ENCODE measurements at regions of chr1 and their contacts with region 1.

Region 1: DNA sequence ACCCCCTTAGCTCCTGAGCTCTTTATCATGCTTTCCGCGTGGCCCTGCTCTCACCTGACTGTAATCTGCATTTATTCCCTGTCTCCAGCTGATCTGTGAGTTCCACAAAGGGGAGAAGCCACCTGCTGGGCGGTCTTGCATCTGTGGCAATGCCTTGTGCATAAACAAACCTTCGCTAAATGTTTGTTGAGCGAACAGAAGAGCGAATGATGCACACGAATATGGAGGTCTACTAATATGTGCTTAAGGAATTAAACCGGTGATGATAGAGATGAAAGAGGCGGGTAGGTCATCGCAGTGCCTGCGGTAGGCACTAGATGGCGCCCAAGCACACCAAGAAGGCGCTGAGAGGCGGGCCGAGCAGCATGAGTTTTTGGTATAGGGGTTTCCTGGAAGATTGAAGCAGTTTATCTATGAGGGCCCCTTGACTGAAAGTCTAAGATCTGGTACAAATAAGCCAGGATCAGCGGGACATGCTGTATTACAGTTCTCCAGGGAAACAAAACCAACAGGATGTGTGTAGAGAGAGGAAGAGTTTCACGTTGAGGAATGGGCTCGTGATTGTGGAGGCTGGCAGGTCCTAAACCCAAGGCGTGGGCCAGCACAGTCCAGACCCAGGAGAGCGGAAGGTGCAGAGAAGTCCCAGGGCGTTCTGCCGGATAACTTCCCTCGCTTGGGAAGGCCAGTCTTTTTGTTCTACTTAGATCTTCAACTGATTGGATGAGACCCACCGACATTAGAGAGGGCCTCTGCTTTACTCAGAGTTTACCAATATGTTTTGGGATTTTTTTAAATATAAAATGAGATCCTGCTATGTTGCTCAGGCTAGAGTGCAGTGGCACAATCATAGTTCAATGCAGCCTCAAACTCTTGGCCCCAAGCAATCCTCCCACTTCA is 34.7 kb downstream of the TOMM20 start:
- DNase-seq: peak; percentile 87
- CTCF ChIP-seq: peak; percentile 90

Region 2: GRCh38 chr1:234125283-234125682 is 968.7 kb before region 1 on chr1:
- in situ Hi-C with region 1: loop called (anchors 25 kb)
- DNase-seq: peak; percentile 43
- CTCF ChIP-seq: no peak

Region 3: GRCh38 chr1:234499119-234499942 is 594.6 kb before region 1 on chr1:
- in situ Hi-C with region 1: loop called (anchors 5 kb)
- DNase-seq: peak; percentile 75
- CTCF ChIP-seq: peak; percentile 90

Region 4: DNA sequence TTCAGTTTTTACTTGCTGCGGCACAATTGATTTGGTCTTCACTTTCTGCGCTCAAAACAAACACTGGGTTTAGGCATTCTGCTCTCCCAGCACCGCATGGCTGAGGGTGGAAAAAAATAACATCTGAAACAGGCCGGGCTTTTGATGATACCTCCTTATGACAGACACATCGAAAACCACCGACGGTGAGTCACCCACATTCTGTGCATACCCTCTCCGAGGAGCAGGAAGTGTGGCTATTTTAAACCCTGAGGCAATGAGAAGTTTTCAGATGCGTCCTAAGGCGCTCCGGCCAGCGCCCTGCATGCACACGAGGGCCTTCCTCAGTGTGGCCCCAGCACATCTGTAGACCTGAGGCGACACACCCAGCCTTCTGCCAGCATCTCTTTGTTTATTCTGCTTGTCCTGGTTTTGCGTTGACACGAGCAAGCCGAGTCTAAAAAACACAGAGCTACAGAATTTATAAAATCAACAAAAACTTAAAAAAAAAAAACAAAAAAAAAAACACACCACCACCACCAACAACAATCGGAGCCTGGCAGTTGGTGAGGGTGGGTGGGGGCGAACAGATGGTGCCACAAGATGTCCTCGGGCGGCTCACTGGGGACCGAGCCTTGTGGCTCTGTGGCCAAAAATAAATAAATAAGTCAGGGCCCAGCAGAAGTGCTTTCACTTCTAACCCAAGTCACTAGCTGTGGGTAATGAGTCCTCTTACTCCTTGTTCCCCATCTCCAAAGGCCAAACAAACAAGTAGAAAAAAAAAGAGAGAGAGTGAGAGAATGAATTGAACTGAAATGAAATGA is 321.4 kb before region 1 on chr1:
- in situ Hi-C with region 1: loop called (anchors 25 kb)
- DNase-seq: peak; percentile 89
- CTCF ChIP-seq: peak; percentile 1

Region 5: GRCh38 chr1:235415008-235415904 is 321.3 kb after region 1 on chr1:
- in situ Hi-C with region 1: loop called (anchors 10 kb)
- DNase-seq: peak; percentile 71
- CTCF ChIP-seq: peak; percentile 54